Left ventricle myocardium inferior (tissue), 1 donor: ENCODE measurements at regions of chr2 and their contacts with region 1.

Region 1: GRCh38 chr2:66429071-66429477 is 5.9 kb upstream of the MEIS1 start:
- DNase-seq: no peak
- H3K4me3 ChIP-seq: no peak overlapping the region
- H3K27ac ChIP-seq: no peak overlapping the region
- H3K4me1 ChIP-seq: peaks cover 30% of the 10 kb centered on the region
- H3K27me3 ChIP-seq: peaks cover 85% of the 10 kb centered on the region
- CTCF ChIP-seq: peak; percentile 85

Region 2: GRCh38 chr2:66346231-66346664 is 82.8 kb before region 1 on chr2:
- intact Hi-C with region 1: no loop called
- DNase-seq: no peak
- H3K4me3 ChIP-seq: no peak overlapping the region
- H3K27ac ChIP-seq: no peak overlapping the region
- H3K4me1 ChIP-seq: no peaks in the 10 kb centered on the region
- H3K27me3 ChIP-seq: peaks cover 13% of the 10 kb centered on the region
- CTCF ChIP-seq: no peak

Region 3: DNA sequence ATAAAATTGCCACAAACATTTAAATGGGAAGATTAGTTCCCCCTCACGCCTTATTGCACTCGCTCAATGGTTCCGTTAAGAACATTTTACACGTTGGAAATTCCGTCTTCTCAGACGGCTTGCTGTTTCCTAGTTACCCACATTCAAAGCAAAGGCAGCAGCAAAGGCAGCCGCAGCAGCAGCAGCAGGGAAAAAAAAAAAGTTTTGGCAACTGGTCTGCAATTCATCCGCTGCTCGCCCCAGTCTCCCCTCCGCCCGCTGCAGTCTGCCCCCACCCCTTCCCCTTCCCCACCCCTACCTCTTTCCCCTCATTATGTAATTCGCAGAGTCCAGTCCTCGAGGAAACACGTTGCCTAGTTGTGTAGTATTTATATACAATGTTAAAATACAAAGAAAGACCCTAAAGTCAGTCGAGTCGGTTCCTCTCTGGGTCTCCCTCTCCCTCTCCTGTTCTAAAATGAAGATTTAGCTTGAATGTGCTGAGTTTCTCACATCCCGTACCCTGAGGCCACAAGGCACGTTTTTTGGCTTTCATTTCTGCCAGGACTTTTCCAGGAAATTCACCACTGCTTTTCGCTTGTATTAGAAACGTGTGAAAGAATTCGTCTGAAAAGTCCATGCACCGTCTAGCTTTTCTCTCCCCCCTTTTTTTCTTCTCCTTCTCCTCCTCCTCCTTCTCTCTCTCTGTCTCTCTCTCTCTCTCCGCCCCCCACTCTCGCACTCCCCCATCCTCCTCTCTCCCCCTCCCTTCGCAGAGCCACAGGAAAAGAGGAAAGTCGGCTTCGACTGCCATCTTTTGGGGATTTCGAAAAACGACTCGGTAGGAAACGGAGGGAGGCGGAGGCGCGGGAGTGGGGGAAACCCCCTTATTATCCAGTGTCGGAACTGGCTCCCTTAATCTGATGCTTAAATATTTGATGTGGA is 145.9 kb after region 1 on chr2:
- intact Hi-C with region 1: loop called (anchors 10 kb)
- DNase-seq: peak; percentile 26
- H3K4me3 ChIP-seq: peak overlapping the region; percentile 66
- H3K27ac ChIP-seq: peak overlapping the region; percentile 57
- H3K4me1 ChIP-seq: peaks cover 45% of the 10 kb centered on the region
- H3K27me3 ChIP-seq: peaks cover 62% of the 10 kb centered on the region
- CTCF ChIP-seq: peak; percentile 54

Region 4: GRCh38 chr2:67840460-67841068 is 1411.5 kb after region 1 on chr2:
- intact Hi-C with region 1: loop called (anchors 10 kb)
- DNase-seq: peak; percentile 50
- H3K4me3 ChIP-seq: no peak overlapping the region
- H3K27ac ChIP-seq: no peak overlapping the region
- H3K4me1 ChIP-seq: peaks cover 5% of the 10 kb centered on the region
- H3K27me3 ChIP-seq: no peaks in the 10 kb centered on the region
- CTCF ChIP-seq: peak; percentile 86